ENCODE measurements at regions of chr9 and their contacts with region 1.

Region 1: DNA sequence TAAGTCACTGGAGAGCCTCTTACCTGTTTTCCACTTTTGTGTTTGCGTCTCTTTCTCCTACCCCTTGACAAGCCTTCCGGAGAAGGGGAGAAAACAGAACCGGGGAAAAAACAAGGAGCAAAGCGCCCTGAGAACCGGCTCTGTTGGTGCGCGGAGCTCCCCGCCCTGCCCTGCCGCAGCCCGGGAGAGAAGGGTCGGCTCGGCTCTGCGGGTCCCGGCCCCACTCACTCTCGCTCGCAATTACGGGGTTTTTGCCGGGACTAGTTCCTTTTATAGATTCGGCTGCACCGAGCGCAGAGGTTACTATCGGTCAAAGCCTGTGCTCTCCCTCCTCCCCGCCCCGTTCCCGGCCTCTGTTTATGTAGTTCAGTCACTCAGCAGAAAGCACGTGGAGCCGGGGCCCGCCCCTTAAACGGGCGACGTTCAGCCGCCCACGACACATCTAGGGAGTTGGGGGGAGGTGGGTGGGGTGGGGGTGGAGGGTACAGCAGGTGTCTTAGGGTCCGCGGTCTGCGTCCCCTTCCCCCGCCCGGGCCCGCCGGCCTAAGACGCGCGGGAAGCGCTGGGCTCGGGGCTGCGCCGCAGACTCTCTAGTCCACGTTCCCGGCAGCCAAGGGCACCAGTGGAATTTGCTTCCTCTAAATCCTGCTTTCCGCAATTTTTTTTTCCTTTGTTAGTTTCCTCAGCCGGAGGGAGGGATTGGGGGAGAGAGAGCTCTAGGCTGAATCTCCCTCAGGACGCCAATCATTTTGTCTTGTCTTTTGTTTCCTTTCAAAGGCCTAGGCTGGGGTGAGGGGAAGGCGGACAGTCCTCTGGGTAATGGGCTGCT is at the start of gene ABCA1:
- DNase-seq: peak; percentile 92
- H3K4me3 ChIP-seq: peak within 1 kb of the TSS; percentile 86
- H3K27ac ChIP-seq: peak within 1 kb of the TSS; percentile 98
- H3K4me1 ChIP-seq: peaks cover 35% of the 10 kb centered on the region
- CTCF ChIP-seq: no peak
- total RNA-seq, gene ABCA1: 8.0 and 10.1 TPM in 2 replicates

Region 2: DNA sequence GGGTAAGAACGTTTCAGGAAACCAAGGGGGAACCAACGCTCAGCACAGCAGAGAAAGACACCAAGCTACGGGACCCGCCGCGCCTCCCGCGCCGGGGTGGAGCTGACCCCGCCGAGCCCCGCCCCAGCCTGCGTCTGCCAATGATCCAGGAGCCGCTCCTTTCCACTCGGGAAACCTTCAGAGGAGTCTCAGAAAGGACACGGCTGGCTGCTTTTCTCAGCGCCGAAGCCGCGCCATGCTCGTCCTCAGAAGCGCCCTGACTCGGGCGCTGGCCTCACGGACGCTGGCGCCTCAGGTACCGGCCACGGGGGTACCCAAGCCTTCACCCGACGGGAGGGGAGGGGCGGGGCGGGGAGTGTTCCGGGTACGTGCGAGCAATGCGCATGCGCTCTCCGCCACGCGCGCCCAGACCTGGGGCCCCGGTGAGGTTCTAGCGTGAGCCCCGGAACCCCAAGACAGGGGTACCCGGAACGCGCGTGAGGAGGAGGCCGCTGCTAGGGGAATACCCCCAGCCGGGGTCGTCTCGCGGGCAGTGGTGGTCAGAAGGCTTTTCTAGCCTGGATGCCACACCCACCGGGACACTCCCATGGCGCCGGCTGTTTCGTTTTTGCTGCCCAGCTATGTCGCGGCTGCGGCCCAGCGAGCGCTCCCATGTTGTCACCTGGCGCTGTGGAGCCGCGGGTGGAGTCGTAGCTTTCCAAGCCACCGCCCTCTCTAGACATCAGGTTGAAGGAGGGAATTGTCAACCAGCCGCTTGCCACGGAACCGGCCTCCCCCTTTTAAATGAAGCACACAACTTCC is 180.4 kb before region 1 on chr9 and contains the start of gene NIPSNAP3A:
- CTCF ChIA-PET with region 1: no interaction called
- POLR2A ChIA-PET with region 1: interaction called, 9 read pairs
- intact Hi-C with region 1: loop called (anchors 2 kb)
- DNase-seq: peak; percentile 88
- H3K4me3 ChIP-seq: peak within 1 kb of the TSS; percentile 93
- H3K27ac ChIP-seq: peak within 1 kb of the TSS; percentile 78
- H3K4me1 ChIP-seq: peaks cover 43% of the 10 kb centered on the region
- CTCF ChIP-seq: no peak
- total RNA-seq, gene NIPSNAP3A: 20.2 and 25.2 TPM in 2 replicates

Region 3: GRCh38 chr9:104863180-104863883 is 64.8 kb before region 1 on chr9:
- CTCF ChIA-PET with region 1: interaction called, 18 read pairs
- POLR2A ChIA-PET with region 1: interaction called, 36 read pairs
- intact Hi-C with region 1: loop called (anchors 1 kb)
- DNase-seq: peak; percentile 84
- H3K4me3 ChIP-seq: no peak overlapping the region
- H3K27ac ChIP-seq: peak overlapping the region; percentile 18
- H3K4me1 ChIP-seq: peaks cover 29% of the 10 kb centered on the region
- CTCF ChIP-seq: peak; percentile 99

Region 4: GRCh38 chr9:104907278-104907951 is 20.7 kb before region 1 on chr9:
- CTCF ChIA-PET with region 1: no interaction called
- POLR2A ChIA-PET with region 1: interaction called, 114 read pairs
- intact Hi-C with region 1: no loop called
- DNase-seq: no peak
- H3K4me3 ChIP-seq: no peak overlapping the region
- H3K27ac ChIP-seq: no peak overlapping the region
- H3K4me1 ChIP-seq: peaks cover 47% of the 10 kb centered on the region
- CTCF ChIP-seq: no peak

Region 5: DNA sequence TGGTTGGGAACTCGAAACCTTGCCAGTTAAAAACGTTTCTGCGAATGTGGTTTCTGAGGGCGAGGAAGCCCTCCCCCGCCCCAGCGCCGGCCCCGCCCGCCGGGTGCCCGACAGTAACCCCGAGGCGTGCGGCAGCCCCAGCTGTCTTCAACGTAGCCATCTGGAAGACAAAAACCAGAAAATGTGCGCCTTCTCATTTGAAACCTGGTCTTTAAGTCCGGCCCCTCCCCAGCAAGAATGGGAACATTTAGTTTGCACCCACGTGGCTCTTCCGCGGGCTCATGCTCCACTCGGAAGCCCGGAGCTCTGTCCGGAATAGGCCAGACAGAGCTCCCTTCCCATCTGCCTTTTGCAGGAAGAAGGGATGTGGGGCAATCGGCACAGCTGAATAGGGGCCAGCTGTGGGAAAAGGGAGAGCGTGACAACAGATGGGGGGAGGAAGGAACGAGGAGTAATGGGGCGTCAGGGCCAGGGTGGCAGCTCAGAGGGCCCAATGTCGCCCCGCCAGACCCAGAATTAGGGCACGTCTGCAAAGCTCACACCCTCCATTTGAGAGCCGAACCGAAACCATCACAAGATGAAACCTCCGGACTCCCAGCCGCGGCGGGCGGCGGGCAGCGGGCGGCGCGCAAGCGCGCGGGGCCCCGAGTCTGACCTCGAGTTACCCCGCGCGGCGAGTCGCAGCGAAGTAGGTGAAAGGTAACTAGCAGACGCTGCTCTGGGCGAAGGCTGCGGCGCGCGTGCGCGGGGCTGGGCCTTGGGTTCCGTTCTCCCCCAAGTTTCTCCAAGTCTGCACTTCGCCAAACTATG is 63.2 kb after region 1 on chr9:
- CTCF ChIA-PET with region 1: no interaction called
- POLR2A ChIA-PET with region 1: interaction called, 3 read pairs
- intact Hi-C with region 1: loop called (anchors 1 kb)
- DNase-seq: peak; percentile 59
- H3K4me3 ChIP-seq: peak overlapping the region; percentile 12
- H3K27ac ChIP-seq: no peak overlapping the region
- H3K4me1 ChIP-seq: peaks cover 23% of the 10 kb centered on the region
- CTCF ChIP-seq: no peak

Region 6: GRCh38 chr9:105157130-105157583 is 229.0 kb after region 1 on chr9:
- CTCF ChIA-PET with region 1: no interaction called
- POLR2A ChIA-PET with region 1: interaction called, 5 read pairs
- intact Hi-C with region 1: loop called (anchors 1 kb)
- DNase-seq: peak; percentile 76
- H3K4me3 ChIP-seq: no peak overlapping the region
- H3K27ac ChIP-seq: no peak overlapping the region
- H3K4me1 ChIP-seq: peaks cover 3% of the 10 kb centered on the region
- CTCF ChIP-seq: peak; percentile 87

Region 7: DNA sequence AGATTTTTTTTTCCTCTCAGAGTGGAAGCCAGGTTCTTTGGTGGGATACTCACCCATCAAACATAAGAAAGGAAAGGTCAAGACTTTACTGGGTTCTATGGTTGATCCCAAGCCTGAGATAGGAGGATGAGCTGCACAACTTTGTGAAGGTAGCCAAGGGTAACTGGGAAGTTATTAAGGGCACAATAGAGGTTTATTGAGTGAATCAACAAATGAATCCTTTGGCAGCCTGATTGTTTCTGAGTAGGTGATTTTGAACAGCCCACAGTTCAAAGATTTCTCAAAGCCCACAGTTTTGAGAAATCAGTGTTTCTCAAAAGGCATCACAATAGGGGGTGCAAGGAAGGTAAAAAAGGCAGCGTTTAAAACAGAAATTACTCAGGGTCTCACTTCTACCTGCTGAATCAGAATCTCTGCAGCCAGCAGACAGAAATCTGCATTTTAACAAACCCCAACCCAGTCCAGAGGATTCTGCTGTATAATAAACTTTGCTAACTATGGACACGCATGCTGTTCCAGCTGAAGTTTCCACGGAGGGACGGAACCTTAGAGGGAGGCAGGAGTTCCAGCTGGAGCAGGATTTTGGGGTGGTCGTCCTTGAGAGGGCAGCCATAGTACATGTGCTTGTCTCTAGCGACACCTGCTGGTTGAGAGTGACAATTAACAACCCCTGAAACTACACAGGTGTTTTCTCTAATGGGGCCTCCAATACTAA is 487.0 kb after region 1 on chr9:
- CTCF ChIA-PET with region 1: no interaction called
- POLR2A ChIA-PET with region 1: interaction called, 5 read pairs
- intact Hi-C with region 1: loop called (anchors 2 kb)
- DNase-seq: peak; percentile 78
- H3K4me3 ChIP-seq: no peak overlapping the region
- H3K27ac ChIP-seq: no peak overlapping the region
- H3K4me1 ChIP-seq: peaks cover 4% of the 10 kb centered on the region
- CTCF ChIP-seq: peak; percentile 99